Stomach (tissue), 19 donors: ENCODE measurements at regions of chr1 and their contacts with region 1.

Region 1: GRCh38 chr1:10540277-10541005 is 65.7 kb downstream of the PEX14 start:
- DNase-seq: peak in 1 of 2 donors; percentile 76
- H3K4me3 ChIP-seq: no peak overlapping the region
- H3K27ac ChIP-seq: peak overlapping the region in 4 of 5 donors; percentile 55 to 81 (median 64)
- H3K4me1 ChIP-seq: peaks cover 0 to 37% (median 16%) of the 10 kb centered on the region in 4 donors
- H3K27me3 ChIP-seq: no peaks in the 10 kb centered on the region
- CTCF ChIP-seq: no peak
- EP300 ChIP-seq: no peak
- POLR2A ChIP-seq: no peak

Region 2: DNA sequence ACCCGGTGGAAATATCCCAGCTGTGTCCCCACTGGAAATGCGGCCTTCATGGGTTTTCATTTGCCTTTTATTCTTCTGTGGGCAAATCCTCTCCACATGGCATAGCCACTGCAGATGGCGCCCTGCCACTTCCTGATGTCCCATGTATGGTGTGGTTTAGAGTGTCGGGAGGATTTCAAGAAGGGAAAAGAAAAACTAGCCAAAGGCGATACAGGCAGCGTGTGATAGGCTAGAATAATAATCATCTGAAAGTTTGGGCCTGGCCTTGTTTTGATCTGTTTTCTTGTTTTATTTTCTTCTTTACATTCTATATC is 57.9 kb after region 1 on chr1:
- intact Hi-C with region 1: loop called (anchors 10 kb)
- DNase-seq: peak in 1 of 2 donors; percentile 43
- H3K4me3 ChIP-seq: no peak overlapping the region
- H3K27ac ChIP-seq: no peak overlapping the region
- H3K4me1 ChIP-seq: peaks cover 24 to 57% (median 38%) of the 10 kb centered on the region in 4 donors
- H3K27me3 ChIP-seq: no peaks in the 10 kb centered on the region
- CTCF ChIP-seq: no peak
- EP300 ChIP-seq: no peak
- POLR2A ChIP-seq: no peak